ENCODE measurements at regions of chr10 and their contacts with region 1.

Region 1: DNA sequence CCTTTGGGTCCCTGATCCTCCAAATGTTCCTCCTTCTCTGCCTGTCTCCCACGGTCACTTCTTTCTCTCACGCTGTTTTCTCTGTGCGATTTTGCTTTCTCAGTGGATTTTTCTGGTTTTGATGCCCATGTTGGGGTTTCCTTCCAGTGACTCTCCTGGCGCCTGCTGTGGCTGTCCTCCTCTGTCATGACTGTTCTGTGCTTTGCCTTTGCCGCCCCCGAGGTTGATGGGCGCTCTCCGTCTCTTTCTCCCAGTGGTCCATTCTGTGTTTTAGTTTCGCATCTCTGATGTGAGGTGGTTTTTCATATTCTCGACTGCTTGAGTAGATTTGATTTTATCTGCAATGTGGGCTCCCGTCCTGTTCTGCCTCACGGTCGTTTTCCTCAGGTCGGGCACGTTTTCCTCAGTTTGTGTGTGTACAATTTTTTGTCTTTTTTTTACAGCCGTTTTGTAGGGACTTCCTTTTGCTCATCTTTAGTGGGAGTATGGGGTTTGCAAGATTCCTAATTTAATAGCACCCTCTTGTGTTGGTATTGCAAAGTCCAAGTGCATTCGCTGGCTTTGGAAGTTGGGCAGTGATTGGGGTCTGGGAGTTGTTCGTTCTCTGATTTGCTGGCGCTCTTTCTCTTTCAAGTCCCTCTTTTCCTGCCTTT is 100.0 kb downstream of the INPP5A start:
- DNase-seq: peak; percentile 66 to 75 (median 67)
- H3K4me3 ChIP-seq: peak overlapping the region in 2 of 7 experiments; percentile 5 to 42
- H3K27ac ChIP-seq: no peak overlapping the region
- H3K4me1 ChIP-seq: peaks cover 0 to 10% (median 5%) of the 10 kb centered on the region in 4 experiments
- H3K27me3 ChIP-seq: no peaks in the 10 kb centered on the region

Region 2: DNA sequence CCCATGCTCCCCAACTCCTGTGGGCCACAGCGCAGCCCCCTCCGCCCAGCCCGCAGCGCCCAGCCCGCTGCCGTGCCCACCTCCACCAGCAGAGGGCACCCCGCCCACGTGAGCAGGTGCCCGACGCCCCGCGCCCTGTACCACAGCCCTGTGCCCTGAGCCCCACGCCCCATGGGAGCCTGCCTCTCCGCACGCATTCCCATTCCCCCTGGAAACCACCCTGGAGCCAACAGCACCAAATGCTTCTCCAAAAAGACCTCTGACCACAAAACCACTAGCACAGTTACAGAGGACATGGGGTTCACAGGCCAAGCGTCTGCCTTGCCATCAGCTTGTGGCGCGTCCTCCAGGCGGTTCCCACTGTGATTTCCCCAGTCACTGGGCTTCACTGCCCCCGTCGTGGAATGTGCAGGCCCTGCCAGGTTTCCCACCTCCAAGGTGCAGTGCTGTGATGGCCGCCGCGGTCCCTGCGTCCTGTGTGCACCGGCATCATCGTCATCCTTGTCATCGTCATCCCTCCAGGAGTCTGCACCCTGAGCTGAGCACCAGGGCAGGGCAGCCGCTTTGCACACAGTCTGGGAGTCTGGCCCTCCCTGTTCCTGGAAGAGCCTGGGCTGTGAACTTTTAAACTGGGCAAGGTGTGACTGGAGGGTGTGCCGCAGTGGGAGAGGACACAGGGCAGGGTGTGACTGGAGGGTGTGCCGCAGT is 178.9 kb before region 1 on chr10:
- CTCF ChIA-PET with region 1: interaction called, 27 read pairs
- POLR2A ChIA-PET with region 1: no interaction called
- DNase-seq: peak in 2 of 3 donors; percentile 68
- H3K4me3 ChIP-seq: no peak overlapping the region
- H3K27ac ChIP-seq: no peak overlapping the region
- H3K4me1 ChIP-seq: peaks cover 0 to 6% (median 3%) of the 10 kb centered on the region in 4 experiments
- H3K27me3 ChIP-seq: no peaks in the 10 kb centered on the region

Region 3: GRCh38 chr10:132560241-132560731 is 77.3 kb before region 1 on chr10:
- CTCF ChIA-PET with region 1: no interaction called
- POLR2A ChIA-PET with region 1: interaction called, 13 read pairs
- DNase-seq: peak in 2 of 3 donors; percentile 84 to 88
- H3K4me3 ChIP-seq: peak overlapping the region in 1 of 7 experiments; percentile 43
- H3K27ac ChIP-seq: peak overlapping the region in 1 of 2 experiments; percentile 5
- H3K4me1 ChIP-seq: peaks cover 8 to 68% (median 36%) of the 10 kb centered on the region in 4 experiments
- H3K27me3 ChIP-seq: no peaks in the 10 kb centered on the region

Region 4: GRCh38 chr10:132662186-132662920 is 24.8 kb after region 1 on chr10:
- CTCF ChIA-PET with region 1: no interaction called
- POLR2A ChIA-PET with region 1: no interaction called
- DNase-seq: no peak
- H3K4me3 ChIP-seq: no peak overlapping the region
- H3K27ac ChIP-seq: no peak overlapping the region
- H3K4me1 ChIP-seq: no peaks in the 10 kb centered on the region
- H3K27me3 ChIP-seq: no peaks in the 10 kb centered on the region